A549 (cell line): ENCODE measurements at regions of chr19 and their contacts with region 1.

Region 1: GRCh38 chr19:7149956-7150705 is 80.6 kb downstream of the ZNF557 start:
- DNase-seq: no peak
- ATAC-seq: peak in 1 of 2 experiments; percentile 34; a peak in 1 of 6 replicates
- H3K4me3 ChIP-seq: no peak overlapping the region
- H3K27ac ChIP-seq: no peak overlapping the region
- H3K4me1 ChIP-seq: no peaks in the 10 kb centered on the region
- CTCF ChIP-seq: no peak
- EP300 ChIP-seq: no peak
- POLR2A ChIP-seq: no peak
- RAD21 ChIP-seq: no peak

Region 2: GRCh38 chr19:6718741-6719539 is 431.2 kb before region 1 on chr19:
- CTCF ChIA-PET with region 1: no interaction called
- POLR2A ChIA-PET with region 1: no interaction called
- DNase-seq: peak; percentile 58 to 63
- ATAC-seq: peak; percentile 44 to 57; a peak in 3 of 6 replicates
- H3K4me3 ChIP-seq: no peak overlapping the region
- H3K27ac ChIP-seq: peak overlapping the region in 1 of 2 experiments; percentile 83; a peak in 3 of 6 replicates
- H3K4me1 ChIP-seq: peaks cover 45% of the 10 kb centered on the region
- CTCF ChIP-seq: no peak
- EP300 ChIP-seq: no peak
- POLR2A ChIP-seq: no peak
- RAD21 ChIP-seq: no peak

Region 3: DNA sequence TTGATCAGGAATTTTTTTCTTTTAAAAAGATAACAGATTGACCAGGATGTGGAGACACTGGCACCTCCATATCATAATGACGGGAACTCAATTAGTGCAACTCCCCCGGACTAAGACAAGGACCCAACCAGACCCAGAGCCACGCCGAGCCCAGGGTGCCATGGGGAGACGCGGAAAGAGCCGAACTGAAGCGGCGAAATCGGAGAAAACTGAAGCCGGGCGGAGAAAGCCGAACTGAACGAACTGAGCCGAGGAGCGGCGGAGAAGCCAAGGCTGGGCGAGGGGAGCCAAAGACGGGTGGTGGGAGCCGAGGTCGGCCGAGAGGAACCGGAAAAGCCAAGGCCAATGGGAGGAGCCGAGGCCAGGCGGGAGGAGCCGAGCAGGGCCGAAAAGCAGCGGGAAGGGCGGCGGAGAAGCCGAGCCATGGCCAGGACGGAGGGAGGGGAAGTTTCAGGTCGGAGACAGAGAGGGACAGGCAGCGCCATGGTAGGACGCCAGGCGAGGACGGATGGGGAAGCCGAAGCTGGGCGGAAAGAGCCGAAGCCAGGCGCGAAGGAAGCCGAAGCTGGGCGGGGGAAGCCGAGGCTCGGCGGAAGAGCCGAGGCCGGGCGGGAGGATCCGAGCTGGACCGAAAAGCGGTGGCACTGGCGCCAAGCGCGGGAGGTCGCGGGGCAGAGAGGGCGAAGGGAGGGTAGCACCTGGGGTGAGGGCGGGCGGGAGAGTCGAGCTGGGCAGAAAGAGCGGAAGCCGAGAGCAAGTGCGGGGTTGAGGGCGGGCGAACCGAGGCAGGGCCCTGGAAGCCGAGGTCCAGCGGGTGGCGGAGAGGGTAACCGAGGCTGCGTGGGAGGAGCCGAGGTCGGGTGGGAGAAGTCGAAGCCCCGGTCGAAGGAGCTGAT is 51.2 kb before region 1 on chr19:
- CTCF ChIA-PET with region 1: interaction called, 10 read pairs
- POLR2A ChIA-PET with region 1: no interaction called
- DNase-seq: peak; percentile 70 to 86
- ATAC-seq: peak; percentile 89 to 96
- H3K4me3 ChIP-seq: peak overlapping the region; percentile 50
- H3K27ac ChIP-seq: peak overlapping the region; percentile 78 to 96
- H3K4me1 ChIP-seq: 0 out of 3 replicates have a peak, but pooled peaks cover 3% of the 10 kb centered on the region
- CTCF ChIP-seq: no peak
- EP300 ChIP-seq: no peak
- POLR2A ChIP-seq: peak; percentile 51
- RAD21 ChIP-seq: no peak

Region 4: DNA sequence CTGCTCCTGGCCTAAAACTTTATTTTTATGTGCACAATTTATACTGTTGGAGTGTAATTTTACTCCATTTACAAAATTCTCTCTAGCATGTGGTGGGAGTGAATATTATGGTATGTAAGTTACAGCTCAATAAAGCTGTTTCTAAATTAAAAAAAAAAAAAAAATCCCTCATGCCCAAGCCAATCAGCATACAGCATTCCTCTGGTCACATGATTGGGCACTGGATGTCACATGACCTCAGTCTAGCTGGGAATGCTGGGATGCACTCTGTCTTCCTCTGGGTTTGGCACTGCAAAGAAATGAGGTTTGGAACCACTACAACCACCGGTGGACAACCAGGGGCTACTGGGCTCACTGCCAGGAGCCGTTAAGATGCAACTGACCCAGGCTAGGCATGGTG is 13.0 kb before region 1 on chr19:
- CTCF ChIA-PET with region 1: interaction called, 16 read pairs
- POLR2A ChIA-PET with region 1: no interaction called
- DNase-seq: peak in 1 of 2 experiments; percentile 10
- ATAC-seq: no peak
- H3K4me3 ChIP-seq: no peak overlapping the region
- H3K27ac ChIP-seq: no peak overlapping the region
- H3K4me1 ChIP-seq: peaks cover 16% of the 10 kb centered on the region
- CTCF ChIP-seq: no peak
- EP300 ChIP-seq: no peak
- POLR2A ChIP-seq: no peak
- RAD21 ChIP-seq: no peak

Region 5: DNA sequence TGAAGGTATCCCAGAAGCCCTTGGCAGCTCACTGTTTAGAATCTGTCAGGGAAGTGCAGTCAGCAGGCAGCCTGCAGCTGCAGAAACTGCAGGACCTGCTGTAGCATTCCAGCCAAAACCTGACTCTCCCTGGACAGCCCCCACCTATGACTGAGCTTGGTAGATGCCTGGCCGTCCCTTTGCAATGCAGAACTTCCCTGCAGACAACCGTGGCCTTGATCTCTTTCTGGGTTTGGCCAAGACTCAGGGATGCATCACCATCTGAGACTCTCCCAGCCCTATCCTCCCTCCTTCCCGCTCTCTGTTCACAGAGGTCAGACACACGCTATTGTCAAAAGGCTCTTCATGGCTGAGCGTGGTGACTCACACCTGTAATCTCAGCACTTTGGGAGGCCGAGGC is 18.8 kb after region 1 on chr19:
- CTCF ChIA-PET with region 1: interaction called, 10 read pairs
- POLR2A ChIA-PET with region 1: no interaction called
- DNase-seq: no peak
- ATAC-seq: no peak
- H3K4me3 ChIP-seq: no peak overlapping the region
- H3K27ac ChIP-seq: no peak overlapping the region
- H3K4me1 ChIP-seq: no peaks in the 10 kb centered on the region
- CTCF ChIP-seq: no peak
- EP300 ChIP-seq: no peak
- POLR2A ChIP-seq: no peak
- RAD21 ChIP-seq: no peak